ENCODE measurements at regions of chr17 and their contacts with region 1.

Region 1: DNA sequence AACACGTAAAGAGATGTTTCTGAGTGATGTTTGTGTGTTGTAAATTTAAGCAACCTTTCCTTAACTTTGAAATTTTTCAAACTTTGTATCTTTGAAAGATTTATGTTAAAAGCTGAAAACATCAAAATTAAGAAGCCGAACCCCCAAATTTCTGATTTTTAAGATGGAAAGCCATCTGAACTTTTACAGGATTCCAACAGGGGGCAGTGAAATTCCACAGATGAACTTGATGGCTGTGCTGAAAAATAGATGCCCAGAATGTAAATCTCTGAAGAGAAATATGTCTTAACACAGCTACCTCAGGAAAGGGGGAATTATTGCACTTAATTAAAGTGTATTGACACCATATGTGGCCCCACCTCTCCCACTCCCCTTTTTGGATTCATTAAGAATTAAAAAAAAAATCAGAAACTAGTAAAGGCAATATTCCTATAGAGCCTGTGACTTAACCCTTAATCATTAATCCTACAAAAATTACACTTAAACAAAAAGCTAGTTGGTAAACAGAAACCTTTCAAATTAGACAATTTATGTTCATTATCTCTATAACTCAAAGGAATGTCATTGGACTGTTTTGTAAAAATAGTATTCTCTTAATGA is 597.9 kb downstream of the KCNJ2 start:
- DNase-seq: peak; percentile 3
- H3K4me3 ChIP-seq: no peak overlapping the region
- H3K27ac ChIP-seq: no peak overlapping the region
- H3K27me3 ChIP-seq: no peaks in the 10 kb centered on the region
- CTCF ChIP-seq: peak; percentile 84

Region 2: DNA sequence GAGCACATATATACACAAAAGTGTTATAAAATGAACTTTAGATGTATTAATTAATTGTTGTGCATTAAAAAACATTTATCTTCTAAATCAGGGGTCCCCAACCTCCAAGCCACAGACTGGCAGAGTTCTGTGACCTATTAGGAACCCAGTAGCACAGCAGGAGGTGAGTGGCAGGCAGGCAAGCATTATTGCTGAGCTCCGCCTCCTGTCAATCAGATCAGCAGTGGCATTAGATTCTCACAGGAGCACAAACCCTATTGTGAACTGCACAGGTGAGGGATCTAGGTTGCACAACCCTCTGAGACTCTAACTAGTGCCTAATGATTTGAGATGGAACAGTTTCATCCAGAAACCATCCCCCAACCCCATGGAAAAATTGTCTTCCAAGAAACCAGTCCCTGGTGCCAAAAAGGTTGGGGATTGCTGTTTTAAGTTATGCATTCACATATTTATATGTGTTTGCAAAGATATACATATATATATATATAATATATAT is 14.2 kb before region 1 on chr17:
- CTCF ChIA-PET with region 1: interaction called, 18 read pairs
- POLR2A ChIA-PET with region 1: no interaction called
- DNase-seq: no peak
- H3K4me3 ChIP-seq: no peak overlapping the region
- H3K27ac ChIP-seq: no peak overlapping the region
- H3K27me3 ChIP-seq: no peaks in the 10 kb centered on the region
- CTCF ChIP-seq: no peak

Region 3: GRCh38 chr17:71084219-71084618 is 317.0 kb after region 1 on chr17:
- CTCF ChIA-PET with region 1: interaction called, 28 read pairs
- POLR2A ChIA-PET with region 1: no interaction called
- DNase-seq: no peak
- H3K4me3 ChIP-seq: no peak overlapping the region
- H3K27ac ChIP-seq: no peak overlapping the region
- H3K27me3 ChIP-seq: no peaks in the 10 kb centered on the region
- CTCF ChIP-seq: peak; percentile 34; the same call in 1 of the 2 replicates

Region 4: GRCh38 chr17:71142333-71142732 is 375.1 kb after region 1 on chr17:
- CTCF ChIA-PET with region 1: interaction called, 11 read pairs
- POLR2A ChIA-PET with region 1: interaction called, 3 read pairs
- DNase-seq: no peak
- H3K4me3 ChIP-seq: no peak overlapping the region
- H3K27ac ChIP-seq: no peak overlapping the region
- H3K27me3 ChIP-seq: no peaks in the 10 kb centered on the region
- CTCF ChIP-seq: no peak

Region 5: GRCh38 chr17:71460943-71461342 is 693.7 kb after region 1 on chr17:
- CTCF ChIA-PET with region 1: interaction called, 59 read pairs
- POLR2A ChIA-PET with region 1: no interaction called
- DNase-seq: no peak
- H3K4me3 ChIP-seq: no peak overlapping the region
- H3K27ac ChIP-seq: no peak overlapping the region
- H3K27me3 ChIP-seq: no peaks in the 10 kb centered on the region
- CTCF ChIP-seq: peak; percentile 51

Region 6: DNA sequence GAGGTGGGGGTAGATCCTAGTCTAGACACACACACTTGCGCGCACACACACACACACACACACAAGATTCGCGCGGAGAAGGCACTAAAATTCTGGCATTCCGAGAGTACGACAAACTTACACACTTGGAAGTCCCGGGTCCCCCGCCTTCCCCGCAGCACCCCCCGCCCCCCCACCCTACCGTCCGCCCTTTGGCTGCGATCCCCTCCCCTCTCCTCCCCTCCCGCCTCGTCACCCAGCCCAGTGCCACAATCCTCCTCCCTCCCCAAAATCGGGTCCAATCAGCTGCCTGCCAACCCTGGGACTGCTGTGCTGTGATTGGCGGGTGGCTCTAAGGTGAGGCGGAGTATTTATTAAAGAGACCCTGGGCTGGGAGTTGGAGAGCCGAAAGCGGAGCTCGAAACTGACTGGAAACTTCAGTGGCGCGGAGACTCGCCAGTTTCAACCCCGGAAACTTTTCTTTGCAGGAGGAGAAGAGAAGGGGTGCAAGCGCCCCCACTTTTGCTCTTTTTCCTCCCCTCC is 1353.5 kb after region 1 on chr17 and contains the start of gene SOX9:
- CTCF ChIA-PET with region 1: interaction called, 26 read pairs
- POLR2A ChIA-PET with region 1: no interaction called
- DNase-seq: peak; percentile 87
- H3K4me3 ChIP-seq: peak within 1 kb of the TSS; percentile 94
- H3K27ac ChIP-seq: peak within 1 kb of the TSS; percentile 68
- H3K27me3 ChIP-seq: peaks cover 27% of the 10 kb centered on the region
- CTCF ChIP-seq: no peak
- polyA plus RNA-seq, gene SOX9: 5.5 and 6.0 TPM in 2 replicates

Measured in AG04450 (cell line).